B cell (primary cell): ENCODE measurements at regions of chr2 and their contacts with region 1.

Region 1: DNA sequence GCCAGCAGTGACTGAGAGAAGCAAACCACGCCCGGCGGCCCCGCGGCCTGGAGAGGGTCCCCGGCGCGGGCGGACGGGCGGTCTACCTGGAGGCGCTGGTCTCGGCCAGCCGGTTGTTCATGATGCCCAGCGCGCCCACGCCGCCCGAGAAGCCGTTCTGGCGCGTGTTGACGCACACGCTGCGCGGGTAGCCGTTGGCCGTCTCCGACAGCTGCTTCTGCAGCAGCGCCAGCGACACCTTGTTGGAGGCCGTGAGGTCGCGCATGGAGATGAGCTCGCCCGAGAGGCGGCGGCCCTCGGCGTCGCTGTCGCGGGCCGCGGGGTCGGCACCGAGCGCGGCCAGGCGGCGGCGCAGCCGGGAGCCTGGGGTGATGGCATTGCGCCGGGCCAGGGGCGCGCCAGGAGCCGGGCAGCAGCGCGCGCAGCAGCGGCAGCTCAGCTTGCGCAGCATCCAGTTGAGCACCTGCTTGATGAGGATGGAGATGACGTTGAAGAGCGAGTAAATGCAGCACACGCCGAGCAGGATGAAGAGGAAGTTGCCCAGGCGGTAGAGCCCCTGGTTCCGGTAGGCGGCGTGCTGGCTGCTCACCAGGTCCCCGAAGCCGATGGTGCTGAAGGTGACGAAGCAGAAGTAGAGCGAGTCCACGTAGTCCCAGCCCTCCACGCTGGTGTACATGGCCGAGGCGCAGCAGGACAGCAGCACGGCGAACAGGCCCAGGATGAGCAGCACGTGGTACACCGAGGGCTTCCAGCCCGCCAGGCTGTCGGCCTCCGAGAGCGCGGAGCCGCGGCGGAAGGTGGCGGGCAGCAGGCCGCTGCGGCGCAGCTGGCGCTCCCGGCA is 118.1 kb downstream of the MSH2 start:
- DNase-seq: peak; percentile 94
- ATAC-seq: peak; percentile 90
- H3K4me3 ChIP-seq: peak overlapping the region; percentile 11 to 71 (median 60)
- H3K4me3 Mint-ChIP-seq: peak overlapping the region; percentile 89
- H3K27ac ChIP-seq: peak overlapping the region in 1 of 2 donors; percentile 27
- H3K27ac Mint-ChIP-seq: peak overlapping the region; percentile 93
- H3K4me1 ChIP-seq: peaks cover 12 to 15% of the 10 kb centered on the region in 2 donors
- H3K4me1 Mint-ChIP-seq: peaks cover 18% of the 10 kb centered on the region
- H3K27me3 ChIP-seq: peaks cover 0 to 8% (median 0%) of the 10 kb centered on the region in 4 experiments
- H3K27me3 Mint-ChIP-seq: no peaks in the 10 kb centered on the region
- CTCF ChIP-seq: peak; percentile 69

Region 2: DNA sequence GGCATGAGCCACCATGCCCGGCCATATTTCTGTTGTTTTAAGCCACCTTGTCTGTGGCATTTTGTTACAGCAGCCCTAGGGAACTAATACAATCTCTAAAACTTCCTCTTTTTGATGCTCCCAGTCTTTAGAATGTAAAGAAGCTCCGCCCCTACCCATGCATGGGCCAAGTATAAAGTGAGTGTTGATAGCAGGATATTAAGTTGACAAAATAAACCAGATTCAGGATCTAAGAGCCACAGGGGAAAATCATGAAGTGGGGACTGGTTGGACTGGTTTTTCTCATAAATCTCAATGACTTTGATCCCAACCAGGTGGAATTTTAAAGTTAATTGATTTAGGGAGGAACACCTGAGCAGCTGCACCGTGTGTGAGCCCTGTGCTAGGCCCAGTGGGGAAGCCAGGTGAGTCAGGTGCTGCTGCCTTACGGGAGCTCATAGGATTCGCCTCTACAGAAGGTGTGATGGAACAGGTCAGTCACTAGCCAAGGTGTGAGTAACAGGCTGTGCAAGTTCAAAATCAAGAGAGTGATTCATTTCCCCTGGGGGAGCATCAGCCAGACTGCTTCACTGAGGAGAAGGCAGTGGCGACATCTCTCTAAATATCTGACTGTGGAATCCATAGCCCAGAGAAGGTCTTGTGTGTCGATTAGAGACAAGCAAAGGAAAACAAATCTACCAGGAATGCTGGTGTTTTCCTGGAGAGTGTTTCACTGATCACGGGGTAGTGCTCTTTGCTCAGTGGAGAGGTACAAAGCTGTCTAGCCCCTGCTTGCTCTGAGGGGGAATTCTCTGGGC is 181.1 kb before region 1 on chr2:
- CTCF ChIA-PET with region 1: interaction called, 3 read pairs
- POLR2A ChIA-PET with region 1: no interaction called
- intact Hi-C with region 1: loop called (anchors 10 kb)
- DNase-seq: no peak
- ATAC-seq: no peak
- H3K4me3 ChIP-seq: no peak overlapping the region
- H3K4me3 Mint-ChIP-seq: no peak overlapping the region
- H3K27ac ChIP-seq: no peak overlapping the region
- H3K27ac Mint-ChIP-seq: no peak overlapping the region
- H3K4me1 ChIP-seq: peaks cover 21 to 26% of the 10 kb centered on the region in 2 donors
- H3K4me1 Mint-ChIP-seq: peaks cover 30% of the 10 kb centered on the region
- H3K27me3 ChIP-seq: peaks cover 0 to 7% (median 1%) of the 10 kb centered on the region in 4 experiments
- H3K27me3 Mint-ChIP-seq: peaks cover 8% of the 10 kb centered on the region
- CTCF ChIP-seq: no peak

Region 3: DNA sequence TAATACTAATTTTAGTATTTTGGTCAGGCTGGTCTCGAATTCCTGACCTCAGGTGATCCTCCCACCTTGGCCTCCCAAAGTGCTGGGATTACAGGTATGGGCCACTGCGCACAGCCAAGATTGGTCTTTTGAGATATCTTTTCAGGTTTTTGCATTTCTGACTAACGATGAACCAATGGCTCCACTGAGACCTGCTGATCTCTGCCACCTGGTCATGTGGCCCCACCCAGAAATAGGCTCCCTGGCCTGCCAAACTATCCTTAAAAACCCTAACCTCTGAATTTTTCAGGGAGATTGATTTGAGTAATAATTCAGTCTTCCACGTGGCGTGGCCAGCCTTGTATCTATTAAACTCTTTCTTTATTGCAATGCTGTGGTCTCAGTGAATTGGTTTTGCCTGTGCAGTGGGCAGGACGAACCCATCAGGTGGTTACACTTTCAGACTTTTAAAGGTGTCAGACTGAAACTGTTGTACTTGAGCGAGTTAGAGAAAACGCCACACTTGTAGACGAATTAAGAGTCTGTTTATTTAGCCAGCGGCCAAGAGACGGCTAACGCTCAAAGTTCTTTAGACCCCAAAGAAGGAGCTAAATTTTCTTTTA is 176.1 kb after region 1 on chr2:
- CTCF ChIA-PET with region 1: interaction called, 3 read pairs
- POLR2A ChIA-PET with region 1: interaction called, 3 read pairs
- intact Hi-C with region 1: loop called (anchors 2 kb)
- DNase-seq: peak; percentile 55
- ATAC-seq: peak; percentile 34
- H3K4me3 ChIP-seq: no peak overlapping the region
- H3K4me3 Mint-ChIP-seq: peak overlapping the region; percentile 51
- H3K27ac ChIP-seq: peak overlapping the region; percentile 20 to 57
- H3K27ac Mint-ChIP-seq: peak overlapping the region; percentile 66
- H3K4me1 ChIP-seq: peaks cover 41 to 58% of the 10 kb centered on the region in 2 donors
- H3K4me1 Mint-ChIP-seq: peaks cover 65% of the 10 kb centered on the region
- H3K27me3 ChIP-seq: no peaks in the 10 kb centered on the region
- H3K27me3 Mint-ChIP-seq: no peaks in the 10 kb centered on the region
- CTCF ChIP-seq: no peak

Region 4: GRCh38 chr2:47767880-47768609 is 247.0 kb after region 1 on chr2:
- CTCF ChIA-PET with region 1: interaction called, 77 read pairs
- POLR2A ChIA-PET with region 1: interaction called, 7 read pairs
- intact Hi-C with region 1: loop called (anchors 1 kb)
- DNase-seq: peak; percentile 80
- ATAC-seq: peak; percentile 96
- H3K4me3 ChIP-seq: peak overlapping the region in 1 of 5 experiments; percentile 32
- H3K4me3 Mint-ChIP-seq: peak overlapping the region; percentile 46
- H3K27ac ChIP-seq: no peak overlapping the region
- H3K27ac Mint-ChIP-seq: peak overlapping the region; percentile 18
- H3K4me1 ChIP-seq: peaks cover 4 to 9% of the 10 kb centered on the region in 2 donors
- H3K4me1 Mint-ChIP-seq: peaks cover 6% of the 10 kb centered on the region
- H3K27me3 ChIP-seq: peaks cover 0 to 5% (median 0%) of the 10 kb centered on the region in 4 experiments
- H3K27me3 Mint-ChIP-seq: no peaks in the 10 kb centered on the region
- CTCF ChIP-seq: peak; percentile 98

Region 5: GRCh38 chr2:47906157-47907038 is 385.4 kb after region 1 on chr2 and contains the start of gene FBXO11:
- CTCF ChIA-PET with region 1: no interaction called
- POLR2A ChIA-PET with region 1: no interaction called
- intact Hi-C with region 1: loop called (anchors 2 kb)
- DNase-seq: peak; percentile 97
- ATAC-seq: peak; percentile 82
- H3K4me3 ChIP-seq: peak within 1 kb of the TSS; percentile 54 to 97 (median 95)
- H3K4me3 Mint-ChIP-seq: peak within 1 kb of the TSS; percentile 88
- H3K27ac ChIP-seq: peak within 1 kb of the TSS; percentile 83 to 91
- H3K27ac Mint-ChIP-seq: peak within 1 kb of the TSS; percentile 91
- H3K4me1 ChIP-seq: peaks cover 13 to 24% of the 10 kb centered on the region in 2 donors
- H3K4me1 Mint-ChIP-seq: peaks cover 37% of the 10 kb centered on the region
- H3K27me3 ChIP-seq: no peaks in the 10 kb centered on the region
- H3K27me3 Mint-ChIP-seq: no peaks in the 10 kb centered on the region
- CTCF ChIP-seq: no peak
- total RNA-seq, gene FBXO11: 107 and 117 TPM in 2 replicates